ENCODE measurements at regions of chr13 and their contacts with region 1.

Region 1: GRCh38 chr13:112873851-112874750 is 94.9 kb upstream of the MCF2L start:
- DNase-seq: peak; percentile 88
- H3K4me3 Mint-ChIP-seq: peak overlapping the region; percentile 47
- H3K27ac Mint-ChIP-seq: peak overlapping the region; percentile 92
- H3K4me1 Mint-ChIP-seq: peaks cover 19% of the 10 kb centered on the region
- H3K27me3 Mint-ChIP-seq: no peaks in the 10 kb centered on the region

Region 2: GRCh38 chr13:112616586-112617362 is 257.3 kb before region 1 on chr13:
- CTCF ChIA-PET with region 1: interaction called, 3 read pairs
- intact Hi-C with region 1: loop called (anchors 1 kb)
- DNase-seq: peak; percentile 47
- H3K4me3 Mint-ChIP-seq: no peak overlapping the region
- H3K27ac Mint-ChIP-seq: no peak overlapping the region
- H3K4me1 Mint-ChIP-seq: no peaks in the 10 kb centered on the region
- H3K27me3 Mint-ChIP-seq: peaks cover 5% of the 10 kb centered on the region

Region 3: GRCh38 chr13:112752711-112753541 is 121.2 kb before region 1 on chr13:
- CTCF ChIA-PET with region 1: no interaction called
- intact Hi-C with region 1: loop called (anchors 1 kb)
- DNase-seq: peak; percentile 59
- H3K4me3 Mint-ChIP-seq: peak overlapping the region; percentile 2
- H3K27ac Mint-ChIP-seq: peak overlapping the region; percentile 11
- H3K4me1 Mint-ChIP-seq: peaks cover 24% of the 10 kb centered on the region
- H3K27me3 Mint-ChIP-seq: no peaks in the 10 kb centered on the region

Region 4: DNA sequence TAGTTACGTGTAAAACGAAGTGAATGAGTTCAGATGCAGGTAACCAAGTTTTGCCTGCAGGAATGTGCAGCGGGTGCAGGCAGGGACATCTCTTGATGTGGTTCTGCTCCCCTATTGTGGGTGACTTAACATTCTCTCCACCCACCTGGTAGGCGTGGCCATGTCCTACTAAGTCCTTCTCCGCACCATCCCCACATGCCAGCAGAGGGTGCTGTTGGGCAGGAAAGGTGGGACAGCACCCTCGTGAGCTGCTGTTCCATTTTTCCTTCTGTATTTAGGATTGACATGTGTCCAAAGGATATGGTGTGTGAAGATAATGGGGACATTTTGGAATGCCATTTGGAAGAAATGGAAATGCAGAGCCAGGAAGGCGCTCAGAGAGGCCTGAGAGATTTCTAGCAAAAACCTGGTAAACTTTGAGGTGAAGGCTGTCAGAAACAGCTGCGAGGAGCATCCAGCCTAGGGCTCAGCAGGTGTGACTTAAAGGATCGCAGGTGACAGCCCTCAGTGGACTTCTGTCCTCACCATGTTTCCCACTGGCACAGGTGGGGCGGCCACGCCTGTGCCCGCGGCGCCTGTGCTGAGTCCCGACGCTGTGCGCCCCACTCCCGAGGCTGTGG is 68.7 kb after region 1 on chr13:
- CTCF ChIA-PET with region 1: no interaction called
- intact Hi-C with region 1: no loop called
- DNase-seq: peak; percentile 99
- H3K4me3 Mint-ChIP-seq: peak overlapping the region; percentile 81
- H3K27ac Mint-ChIP-seq: no peak overlapping the region
- H3K4me1 Mint-ChIP-seq: peaks cover 7% of the 10 kb centered on the region
- H3K27me3 Mint-ChIP-seq: peaks cover 5% of the 10 kb centered on the region

Region 5: GRCh38 chr13:113064534-113065405 is 190.7 kb after region 1 on chr13:
- CTCF ChIA-PET with region 1: no interaction called
- intact Hi-C with region 1: no loop called
- DNase-seq: no peak
- H3K4me3 Mint-ChIP-seq: no peak overlapping the region
- H3K27ac Mint-ChIP-seq: no peak overlapping the region
- H3K4me1 Mint-ChIP-seq: no peaks in the 10 kb centered on the region
- H3K27me3 Mint-ChIP-seq: no peaks in the 10 kb centered on the region